Common myeloid progenitor, CD34-positive (primary cell): ENCODE measurements at regions of chr12 and their contacts with region 1.

Region 1: DNA sequence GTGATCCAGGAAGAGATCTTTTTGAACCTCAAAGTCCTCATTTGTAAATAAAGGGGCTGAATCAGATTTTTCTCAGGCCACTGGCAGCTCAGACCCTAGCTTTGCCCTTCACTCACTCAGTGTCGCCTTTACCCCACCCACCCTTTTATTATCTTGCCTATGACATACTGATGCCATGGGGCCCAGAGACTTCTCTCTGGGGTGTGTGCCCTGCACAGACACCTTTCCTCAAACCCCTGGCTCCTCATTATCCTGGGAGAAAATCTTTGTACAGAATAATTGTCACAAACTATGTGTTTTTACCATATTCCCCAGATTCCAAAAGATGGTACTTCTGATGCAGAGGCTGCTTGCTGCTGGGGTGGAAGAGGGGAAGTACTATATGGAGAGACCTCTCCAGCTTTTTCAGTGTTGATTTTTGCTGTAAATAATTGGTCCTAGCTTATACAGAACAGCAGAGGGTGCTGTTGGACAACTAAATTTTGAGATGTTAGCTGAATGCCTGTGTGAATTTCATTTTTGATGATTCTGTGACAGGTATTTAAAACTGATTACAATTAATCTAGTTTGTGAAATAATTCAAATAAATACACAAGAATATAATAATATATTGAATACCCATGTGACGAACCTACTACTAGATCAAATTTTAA is 53.9 kb upstream of the DCD start:
- DNase-seq: peak; percentile 70 to 86 (median 80)
- H3K4me3 ChIP-seq: no peak overlapping the region
- H3K27ac ChIP-seq: no peak overlapping the region
- H3K4me1 ChIP-seq: peaks cover 2 to 5% (median 4%) of the 10 kb centered on the region in 4 experiments
- H3K27me3 ChIP-seq: no peaks in the 10 kb centered on the region

Region 2: GRCh38 chr12:54689984-54690383 is 12.1 kb before region 1 on chr12:
- CTCF ChIA-PET with region 1: interaction called, 34 read pairs
- POLR2A ChIA-PET with region 1: no interaction called
- DNase-seq: peak in 2 of 3 donors; percentile 14 to 16
- H3K4me3 ChIP-seq: no peak overlapping the region
- H3K27ac ChIP-seq: no peak overlapping the region
- H3K4me1 ChIP-seq: no peaks in the 10 kb centered on the region
- H3K27me3 ChIP-seq: peaks cover 2 to 17% (median 6%) of the 10 kb centered on the region in 5 experiments

Region 3: GRCh38 chr12:54716261-54716660 is 14.2 kb after region 1 on chr12:
- CTCF ChIA-PET with region 1: interaction called, 14 read pairs
- POLR2A ChIA-PET with region 1: no interaction called
- DNase-seq: peak in 2 of 3 donors; percentile 9 to 31
- H3K4me3 ChIP-seq: no peak overlapping the region
- H3K27ac ChIP-seq: no peak overlapping the region
- H3K4me1 ChIP-seq: no peaks in the 10 kb centered on the region
- H3K27me3 ChIP-seq: peaks cover 0 to 5% (median 0%) of the 10 kb centered on the region in 5 experiments

Region 4: GRCh38 chr12:54723379-54724256 is 21.6 kb after region 1 on chr12:
- CTCF ChIA-PET with region 1: interaction called, 16 read pairs
- POLR2A ChIA-PET with region 1: no interaction called
- DNase-seq: peak; percentile 46 to 73 (median 65)
- H3K4me3 ChIP-seq: no peak overlapping the region
- H3K27ac ChIP-seq: no peak overlapping the region
- H3K4me1 ChIP-seq: no peaks in the 10 kb centered on the region
- H3K27me3 ChIP-seq: peaks cover 0 to 5% (median 0%) of the 10 kb centered on the region in 5 experiments

Region 5: GRCh38 chr12:54749191-54749818 is 47.2 kb after region 1 on chr12:
- CTCF ChIA-PET with region 1: interaction called, 30 read pairs
- POLR2A ChIA-PET with region 1: no interaction called
- DNase-seq: peak; percentile 72 to 86 (median 80)
- H3K4me3 ChIP-seq: peak overlapping the region in 1 of 7 experiments; percentile 1
- H3K27ac ChIP-seq: no peak overlapping the region
- H3K4me1 ChIP-seq: peaks cover 6 to 12% (median 11%) of the 10 kb centered on the region in 4 experiments
- H3K27me3 ChIP-seq: no peaks in the 10 kb centered on the region

Region 6: GRCh38 chr12:54993161-54993835 is 291.2 kb after region 1 on chr12:
- CTCF ChIA-PET with region 1: interaction called, 21 read pairs
- POLR2A ChIA-PET with region 1: no interaction called
- DNase-seq: peak; percentile 83 to 89 (median 85)
- H3K4me3 ChIP-seq: no peak overlapping the region
- H3K27ac ChIP-seq: no peak overlapping the region
- H3K4me1 ChIP-seq: peaks cover 17 to 52% (median 33%) of the 10 kb centered on the region in 4 experiments
- H3K27me3 ChIP-seq: no peaks in the 10 kb centered on the region